Testis (tissue), 5 donors: ENCODE measurements at regions of chr3 and their contacts with region 1.

Region 1: GRCh38 chr3:58630076-58630709 is 36.4 kb downstream of the FAM3D start:
- DNase-seq: peak; percentile 78
- H3K4me3 ChIP-seq: no peak overlapping the region
- H3K27ac ChIP-seq: peak overlapping the region in 1 of 2 donors; percentile 85
- H3K4me1 ChIP-seq: peaks cover 42% of the 10 kb centered on the region
- H3K27me3 ChIP-seq: no peaks in the 10 kb centered on the region
- CTCF ChIP-seq: peak; percentile 94 to 98 (median 96)
- POLR2A ChIP-seq: no peak

Region 2: GRCh38 chr3:58568572-58569286 is 61.5 kb before region 1 on chr3:
- intact Hi-C with region 1: loop called (anchors 2 kb)
- DNase-seq: peak; percentile 91
- H3K4me3 ChIP-seq: no peak overlapping the region
- H3K27ac ChIP-seq: no peak overlapping the region
- H3K4me1 ChIP-seq: peaks cover 5% of the 10 kb centered on the region
- H3K27me3 ChIP-seq: no peaks in the 10 kb centered on the region
- CTCF ChIP-seq: peak; percentile 96 to 98 (median 97)
- POLR2A ChIP-seq: no peak